ENCODE measurements at regions of chr7 and their contacts with region 1.

Region 1: GRCh38 chr7:2314209-2314955 is at the start of gene SNX8:
- DNase-seq: peak; percentile 91
- H3K4me3 Mint-ChIP-seq: peak within 1 kb of the TSS; percentile 88
- H3K27ac Mint-ChIP-seq: peak within 1 kb of the TSS; percentile 69
- H3K4me1 Mint-ChIP-seq: peaks cover 13% of the 10 kb centered on the region
- H3K27me3 Mint-ChIP-seq: no peaks in the 10 kb centered on the region
- total RNA-seq, gene SNX8: 31.8 and 38.7 TPM in 2 replicates

Region 2: DNA sequence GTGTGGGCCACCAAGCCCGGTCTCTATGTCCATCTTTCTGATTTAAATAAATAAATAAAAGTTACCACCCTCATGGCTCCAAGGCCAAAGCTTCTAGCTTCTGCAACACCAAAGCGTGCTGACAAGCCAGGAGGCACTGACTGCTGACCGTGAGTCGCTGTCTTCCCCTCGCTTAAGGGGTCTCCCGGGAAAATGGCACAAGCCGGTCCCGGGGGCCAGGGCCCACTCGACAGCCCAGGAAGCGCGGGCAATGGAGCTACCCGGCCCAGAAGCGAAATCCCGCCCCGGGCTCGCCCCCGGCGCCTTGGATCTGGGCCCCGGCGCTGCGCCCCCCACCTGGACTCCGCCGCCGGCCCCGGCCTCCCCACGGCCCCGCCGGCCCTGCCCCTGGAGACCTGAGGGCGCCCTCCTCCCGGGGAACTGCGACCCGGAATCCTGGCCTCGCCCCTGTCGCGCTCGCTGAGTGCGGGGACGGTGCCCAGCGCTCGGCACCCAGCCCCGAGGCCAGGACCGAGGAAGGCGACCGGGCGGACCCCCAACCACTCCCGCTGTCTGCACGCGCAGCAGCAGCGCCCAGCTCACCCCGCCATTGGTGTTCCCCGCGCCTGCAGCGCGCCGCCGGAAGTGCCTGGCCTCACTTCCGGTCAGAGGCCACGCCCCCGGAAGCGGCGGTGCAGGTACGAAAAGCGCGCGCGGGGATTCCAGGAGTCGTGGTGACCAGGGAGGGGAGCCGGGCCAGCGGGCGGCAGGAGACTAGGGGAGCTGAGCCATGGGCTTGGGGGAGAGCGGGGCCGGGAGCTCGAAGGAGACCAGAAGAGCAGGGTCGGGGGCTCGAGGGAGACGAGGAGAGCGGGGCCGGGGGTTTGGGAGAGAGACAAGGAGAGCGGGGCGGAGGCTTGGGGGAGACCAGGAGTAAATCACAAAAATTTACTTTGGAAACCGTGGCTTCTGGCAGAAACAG is 72.5 kb before region 1 on chr7 and contains the starts of genes MRM2 and NUDT1:
- intact Hi-C with region 1: loop called (anchors 5 kb)
- DNase-seq: peak; percentile 71
- H3K4me3 Mint-ChIP-seq: peak within 1 kb of the TSS; percentile 97
- H3K27ac Mint-ChIP-seq: peak within 1 kb of the TSS; percentile 95
- H3K4me1 Mint-ChIP-seq: peaks cover 22% of the 10 kb centered on the region
- H3K27me3 Mint-ChIP-seq: no peaks in the 10 kb centered on the region
- total RNA-seq, gene MRM2: 40.0 and 40.5 TPM in 2 replicates
- total RNA-seq, gene NUDT1: 68.3 and 69.3 TPM in 2 replicates